ENCODE measurements at regions of chr1 and their contacts with region 1.

Region 1: DNA sequence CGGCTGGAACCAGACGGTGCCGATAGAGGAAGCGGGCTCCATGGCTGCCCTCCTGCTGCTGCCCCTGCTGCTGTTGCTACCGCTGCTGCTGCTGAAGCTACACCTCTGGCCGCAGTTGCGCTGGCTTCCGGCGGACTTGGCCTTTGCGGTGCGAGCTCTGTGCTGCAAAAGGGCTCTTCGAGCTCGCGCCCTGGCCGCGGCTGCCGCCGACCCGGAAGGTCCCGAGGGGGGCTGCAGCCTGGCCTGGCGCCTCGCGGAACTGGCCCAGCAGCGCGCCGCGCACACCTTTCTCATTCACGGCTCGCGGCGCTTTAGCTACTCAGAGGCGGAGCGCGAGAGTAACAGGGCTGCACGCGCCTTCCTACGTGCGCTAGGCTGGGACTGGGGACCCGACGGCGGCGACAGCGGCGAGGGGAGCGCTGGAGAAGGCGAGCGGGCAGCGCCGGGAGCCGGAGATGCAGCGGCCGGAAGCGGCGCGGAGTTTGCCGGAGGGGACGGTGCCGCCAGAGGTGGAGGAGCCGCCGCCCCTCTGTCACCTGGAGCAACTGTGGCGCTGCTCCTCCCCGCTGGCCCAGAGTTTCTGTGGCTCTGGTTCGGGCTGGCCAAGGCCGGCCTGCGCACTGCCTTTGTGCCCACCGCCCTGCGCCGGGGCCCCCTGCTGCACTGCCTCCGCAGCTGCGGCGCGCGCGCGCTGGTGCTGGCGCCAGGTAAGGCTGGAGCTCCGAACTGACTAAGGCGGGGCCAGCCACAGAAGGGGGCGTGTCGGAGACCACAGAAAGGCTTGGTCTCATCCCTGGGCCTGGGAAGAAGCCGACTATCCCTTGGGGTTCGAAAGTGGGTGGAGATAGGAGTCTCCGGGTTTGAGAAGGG is 486 bp downstream of the SLC27A3 start:
- DNase-seq: peak; percentile 81
- ATAC-seq: peak; percentile 69
- H3K4me3 Mint-ChIP-seq: peak overlapping the region; percentile 94
- H3K27ac Mint-ChIP-seq: peak overlapping the region; percentile 92
- H3K4me1 Mint-ChIP-seq: peaks cover 33% of the 10 kb centered on the region
- H3K27me3 Mint-ChIP-seq: no peaks in the 10 kb centered on the region

Region 2: DNA sequence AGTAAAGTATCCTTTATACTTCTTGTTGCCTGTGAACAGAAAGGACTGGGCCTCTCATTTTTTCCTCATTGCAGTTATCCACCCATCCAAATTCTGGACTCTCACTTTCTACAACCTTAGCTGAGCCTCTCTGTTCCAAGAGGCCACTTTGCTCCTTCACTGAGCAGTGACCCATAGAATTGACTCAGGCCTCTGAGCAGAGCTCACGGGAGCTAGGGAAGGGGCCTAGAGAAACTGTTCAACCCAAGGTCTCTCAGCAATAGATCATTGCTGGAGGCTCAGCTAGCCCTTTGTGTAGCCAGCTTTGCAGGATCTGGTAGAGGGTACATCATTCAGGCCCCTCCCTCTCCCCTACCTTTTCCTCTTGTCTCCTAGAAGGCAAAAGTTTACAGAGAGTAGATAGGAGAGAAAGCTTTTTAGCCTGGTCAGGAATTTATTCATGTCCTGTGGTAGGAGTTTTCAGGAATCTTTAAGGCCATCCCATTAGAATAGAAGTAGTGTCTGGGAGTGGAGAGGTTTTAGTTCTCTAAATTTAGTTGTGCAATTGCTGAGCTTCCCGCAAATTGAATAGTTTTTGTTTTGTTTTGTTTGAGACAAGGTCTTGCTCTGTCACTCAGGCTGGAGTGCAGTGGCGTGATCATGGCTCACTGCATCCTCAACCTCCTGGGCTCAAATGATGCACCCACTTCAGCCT is 41.1 kb before region 1 on chr1:
- POLR2A ChIA-PET with region 1: no interaction called
- DNase-seq: no peak
- ATAC-seq: no peak
- H3K4me3 Mint-ChIP-seq: no peak overlapping the region
- H3K27ac Mint-ChIP-seq: no peak overlapping the region
- H3K4me1 Mint-ChIP-seq: peaks cover 19% of the 10 kb centered on the region
- H3K27me3 Mint-ChIP-seq: no peaks in the 10 kb centered on the region

Region 3: DNA sequence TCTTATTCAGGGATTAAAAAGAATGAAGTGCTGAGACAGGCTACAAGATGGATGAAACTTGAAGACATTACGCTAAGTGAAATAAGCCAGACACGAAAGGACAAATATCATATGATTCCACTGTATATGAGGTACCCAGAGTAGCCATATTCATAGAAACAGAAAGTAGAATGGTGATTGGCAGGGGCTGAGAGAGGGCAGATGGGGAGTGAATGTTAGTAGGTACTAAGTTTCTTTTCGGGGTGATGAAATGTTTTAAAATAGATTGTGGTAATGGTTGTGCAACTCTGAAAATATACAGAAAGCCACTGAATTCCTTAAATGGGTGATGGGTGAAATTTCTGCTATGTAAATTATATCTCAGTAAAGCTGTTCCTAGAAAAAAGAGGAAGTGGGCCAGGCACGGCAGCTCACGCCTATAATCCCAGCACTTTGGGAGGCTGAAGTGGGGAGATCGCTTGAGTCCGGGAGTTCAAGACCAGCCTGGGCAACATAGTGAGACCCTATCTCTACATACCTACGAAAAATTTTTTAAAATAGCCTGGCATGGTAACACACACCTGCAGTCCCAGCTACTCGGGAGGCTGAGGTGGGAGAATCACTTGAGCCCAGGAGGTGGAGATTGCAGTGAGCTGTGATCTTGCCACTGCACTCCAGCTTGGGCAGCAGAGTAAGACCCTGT is 15.4 kb after region 1 on chr1:
- POLR2A ChIA-PET with region 1: interaction called, 17 read pairs
- DNase-seq: peak; percentile 43
- ATAC-seq: peak; percentile 89
- H3K4me3 Mint-ChIP-seq: peak overlapping the region; percentile 80
- H3K27ac Mint-ChIP-seq: peak overlapping the region; percentile 89
- H3K4me1 Mint-ChIP-seq: peaks cover 50% of the 10 kb centered on the region
- H3K27me3 Mint-ChIP-seq: no peaks in the 10 kb centered on the region

Region 4: GRCh38 chr1:153922972-153923925 is 147.6 kb after region 1 on chr1 and contains the start of gene GATAD2B:
- POLR2A ChIA-PET with region 1: interaction called, 11 read pairs
- DNase-seq: peak; percentile 96
- ATAC-seq: peak; percentile 94
- H3K4me3 Mint-ChIP-seq: peak within 1 kb of the TSS; percentile 95
- H3K27ac Mint-ChIP-seq: peak within 1 kb of the TSS; percentile 98
- H3K4me1 Mint-ChIP-seq: peaks cover 36% of the 10 kb centered on the region
- H3K27me3 Mint-ChIP-seq: no peaks in the 10 kb centered on the region
- total RNA-seq, gene GATAD2B: 86.3 to 96.7 TPM

Region 5: GRCh38 chr1:153967082-153968000 is 191.6 kb after region 1 on chr1 and contains the start of gene CREB3L4:
- POLR2A ChIA-PET with region 1: interaction called, 14 read pairs
- DNase-seq: peak; percentile 80
- ATAC-seq: peak; percentile 87
- H3K4me3 Mint-ChIP-seq: peak within 1 kb of the TSS; percentile 96
- H3K27ac Mint-ChIP-seq: peak within 1 kb of the TSS; percentile 95
- H3K4me1 Mint-ChIP-seq: peaks cover 51% of the 10 kb centered on the region
- H3K27me3 Mint-ChIP-seq: no peaks in the 10 kb centered on the region
- total RNA-seq, gene CREB3L4: 8.2 to 10.0 TPM